ENCODE measurements at regions of chr10 and their contacts with region 1.

Region 1: DNA sequence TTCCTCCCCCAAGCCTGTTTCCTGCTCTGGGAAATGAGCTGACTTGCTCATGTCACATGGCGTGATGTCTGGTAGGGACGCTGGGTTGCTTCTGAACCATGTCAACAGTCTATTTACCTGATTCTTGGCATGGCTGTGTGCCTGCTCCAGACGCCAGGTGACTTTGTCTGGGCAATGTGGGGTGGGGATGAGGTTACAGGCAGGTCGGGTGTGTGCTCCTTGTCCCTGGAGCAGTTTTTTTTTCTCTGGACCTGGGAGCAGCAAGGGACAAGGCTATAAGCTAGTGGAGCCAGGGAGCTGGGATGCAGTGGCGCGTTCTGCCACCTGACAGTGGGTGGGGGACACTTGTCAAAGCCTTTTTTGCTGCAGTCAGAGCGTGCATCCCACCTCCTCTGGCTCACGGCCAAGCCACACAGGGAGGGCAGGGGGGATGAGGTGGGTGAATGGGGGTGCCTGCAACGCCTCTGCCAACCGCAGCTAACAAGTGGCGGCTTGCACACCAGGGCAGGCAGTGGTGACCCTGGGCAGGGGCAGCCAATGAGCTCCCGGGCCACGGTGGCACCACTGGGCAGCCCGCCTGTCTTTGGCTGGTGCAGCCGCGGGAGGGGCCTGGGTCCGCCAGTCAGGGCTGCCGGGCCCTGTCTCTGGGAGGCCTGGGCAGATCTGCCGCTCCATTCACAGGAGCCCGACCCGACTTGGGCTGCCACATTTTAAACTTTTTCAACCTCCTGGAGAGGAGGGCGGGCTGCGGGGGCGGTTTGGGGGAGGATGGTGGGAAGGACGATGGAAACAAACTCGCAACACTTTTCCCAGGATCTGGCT is 22.9 kb downstream of the DNAJB12 start:
- DNase-seq: peak; percentile 94 to 99 (median 98)
- H3K4me3 ChIP-seq: no peak overlapping the region
- H3K27ac ChIP-seq: peak overlapping the region; percentile 73 to 100 (median 97)
- H3K4me1 ChIP-seq: peaks cover 73 to 97% of the 10 kb centered on the region in 2 donors
- H3K27me3 ChIP-seq: no peaks in the 10 kb centered on the region
- CTCF ChIP-seq: peak; percentile 41 to 87 (median 76)
- POLR2A ChIP-seq: peak; percentile 36 to 63

Region 2: GRCh38 chr10:71957546-71958275 is 374.1 kb before region 1 on chr10:
- intact Hi-C with region 1: loop called in 1 of 2 experiments (anchors 10 kb)
- DNase-seq: no peak
- H3K4me3 ChIP-seq: no peak overlapping the region
- H3K27ac ChIP-seq: no peak overlapping the region
- H3K4me1 ChIP-seq: peaks cover 0 to 13% of the 10 kb centered on the region in 2 donors
- H3K27me3 ChIP-seq: no peaks in the 10 kb centered on the region
- CTCF ChIP-seq: no peak
- POLR2A ChIP-seq: no peak

Region 3: DNA sequence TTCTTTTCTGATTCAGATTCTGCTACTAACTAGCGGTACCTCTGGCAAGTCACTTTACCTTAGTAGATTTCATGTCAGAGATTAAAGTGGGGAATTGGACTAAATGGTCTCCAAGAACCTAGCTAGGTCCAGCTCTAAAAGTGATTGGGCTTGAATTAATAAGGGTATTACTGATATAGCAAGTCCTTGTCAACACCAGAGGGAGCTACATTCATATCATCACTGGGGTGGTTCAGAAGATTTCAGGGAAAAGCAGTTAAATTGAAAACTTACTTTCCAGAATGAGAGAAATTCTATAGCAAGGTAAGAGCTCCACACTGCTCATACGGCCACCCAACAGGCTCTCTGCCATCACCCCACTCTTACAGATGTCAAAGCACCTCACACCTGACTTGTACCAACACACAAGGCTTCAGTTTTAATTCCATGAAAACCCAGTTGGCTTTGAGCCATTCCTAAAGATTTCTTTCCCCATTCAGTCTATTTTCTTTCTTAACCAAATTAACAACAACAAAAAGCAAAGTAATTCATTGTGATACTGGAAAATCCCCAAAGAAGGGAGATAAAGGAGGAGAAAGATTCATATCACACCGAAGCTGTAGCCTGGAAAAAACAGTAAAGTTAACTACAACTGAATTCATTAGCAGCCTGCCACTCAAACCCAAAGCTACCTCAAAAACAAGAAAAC is 205.5 kb before region 1 on chr10:
- intact Hi-C with region 1: loop called in 1 of 2 experiments (anchors 10 kb)
- DNase-seq: peak in 2 of 7 donors; percentile 16 to 30
- H3K4me3 ChIP-seq: no peak overlapping the region
- H3K27ac ChIP-seq: no peak overlapping the region
- H3K4me1 ChIP-seq: peaks cover 4 to 17% of the 10 kb centered on the region in 2 donors
- H3K27me3 ChIP-seq: no peaks in the 10 kb centered on the region
- CTCF ChIP-seq: peak; percentile 18 to 67 (median 54)
- POLR2A ChIP-seq: no peak

Region 4: DNA sequence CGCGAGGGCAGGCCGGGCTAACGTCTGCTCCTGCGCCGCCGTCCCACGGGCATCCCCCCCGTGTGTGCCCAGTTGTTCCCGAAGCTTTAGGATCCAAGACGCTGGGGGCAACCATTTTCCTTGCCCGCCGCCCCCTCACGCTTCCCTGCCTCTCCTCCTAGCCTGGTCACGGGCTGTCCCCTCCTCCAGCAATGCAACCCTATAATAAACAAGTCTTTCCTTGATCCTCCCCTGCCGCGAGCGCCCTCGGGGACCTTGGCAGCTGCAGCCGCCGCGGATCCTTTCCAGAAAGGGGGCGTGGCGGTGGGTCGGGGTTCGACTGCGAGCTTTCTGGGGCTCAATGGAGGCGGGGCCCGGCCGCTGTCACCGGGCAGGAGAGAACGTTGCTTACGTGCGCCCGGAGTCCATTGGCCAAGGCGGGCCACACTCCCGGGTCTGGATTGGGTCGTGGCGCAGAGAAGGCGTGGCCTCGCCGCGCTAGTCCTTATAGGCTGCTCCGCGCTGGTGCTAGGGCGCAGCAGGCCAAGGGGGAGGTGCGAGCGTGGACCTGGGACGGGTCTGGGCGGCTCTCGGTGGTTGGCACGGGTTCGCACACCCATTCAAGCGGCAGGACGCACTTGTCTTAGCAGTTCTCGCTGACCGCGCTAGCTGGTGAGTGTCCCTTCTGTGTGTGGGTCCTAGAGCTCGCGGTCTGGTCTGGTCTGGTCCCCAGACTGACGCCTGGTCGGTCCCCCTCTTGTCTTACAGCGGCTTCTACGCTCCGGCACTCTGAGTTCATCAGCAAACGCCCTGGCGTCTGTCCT is 58.2 kb before region 1 on chr10 and contains the start of gene DDIT4:
- intact Hi-C with region 1: loop called (anchors 5 to 10 kb)
- DNase-seq: peak; percentile 100
- H3K4me3 ChIP-seq: peak within 1 kb of the TSS; percentile 81 to 100 (median 98)
- H3K27ac ChIP-seq: peak within 1 kb of the TSS; percentile 93 to 99 (median 97)
- H3K4me1 ChIP-seq: peaks cover 12 to 21% of the 10 kb centered on the region in 2 donors
- H3K27me3 ChIP-seq: no peaks in the 10 kb centered on the region
- CTCF ChIP-seq: peak in 1 of 6 experiments; percentile 16
- POLR2A ChIP-seq: peak; percentile 100
- total RNA-seq, gene DDIT4: 100 to 711 (median 365) TPM

Region 5: GRCh38 chr10:72419241-72419640 is 87.4 kb after region 1 on chr10:
- intact Hi-C with region 1: no loop called
- DNase-seq: no peak
- H3K4me3 ChIP-seq: no peak overlapping the region
- H3K27ac ChIP-seq: no peak overlapping the region
- H3K4me1 ChIP-seq: no peaks in the 10 kb centered on the region
- H3K27me3 ChIP-seq: no peaks in the 10 kb centered on the region
- CTCF ChIP-seq: no peak
- POLR2A ChIP-seq: no peak